ENCODE measurements at regions of chr13 and their contacts with region 1.

Region 1: GRCh38 chr13:31161828-31162590 is at the start of gene HSPH1:
- DNase-seq: peak; percentile 92
- ATAC-seq: peak; percentile 92
- H3K4me3 ChIP-seq: peak within 1 kb of the TSS; percentile 88
- H3K27ac ChIP-seq: peak within 1 kb of the TSS; percentile 79
- H3K4me1 ChIP-seq: no peaks in the 10 kb centered on the region; the same call in 1 of the 2 replicates
- H3K27me3 ChIP-seq: no peaks in the 10 kb centered on the region
- CTCF ChIP-seq: peak in 2 of 3 experiments; percentile 24 to 25; a peak in 3 of 6 replicates
- EP300 ChIP-seq: peak in 1 of 2 experiments; percentile 85; a peak in 2 of 4 replicates
- POLR2A ChIP-seq: peak; percentile 93
- RAD21 ChIP-seq: no peak
- polyA plus RNA-seq, gene HSPH1: 40.2 to 109 TPM

Region 2: DNA sequence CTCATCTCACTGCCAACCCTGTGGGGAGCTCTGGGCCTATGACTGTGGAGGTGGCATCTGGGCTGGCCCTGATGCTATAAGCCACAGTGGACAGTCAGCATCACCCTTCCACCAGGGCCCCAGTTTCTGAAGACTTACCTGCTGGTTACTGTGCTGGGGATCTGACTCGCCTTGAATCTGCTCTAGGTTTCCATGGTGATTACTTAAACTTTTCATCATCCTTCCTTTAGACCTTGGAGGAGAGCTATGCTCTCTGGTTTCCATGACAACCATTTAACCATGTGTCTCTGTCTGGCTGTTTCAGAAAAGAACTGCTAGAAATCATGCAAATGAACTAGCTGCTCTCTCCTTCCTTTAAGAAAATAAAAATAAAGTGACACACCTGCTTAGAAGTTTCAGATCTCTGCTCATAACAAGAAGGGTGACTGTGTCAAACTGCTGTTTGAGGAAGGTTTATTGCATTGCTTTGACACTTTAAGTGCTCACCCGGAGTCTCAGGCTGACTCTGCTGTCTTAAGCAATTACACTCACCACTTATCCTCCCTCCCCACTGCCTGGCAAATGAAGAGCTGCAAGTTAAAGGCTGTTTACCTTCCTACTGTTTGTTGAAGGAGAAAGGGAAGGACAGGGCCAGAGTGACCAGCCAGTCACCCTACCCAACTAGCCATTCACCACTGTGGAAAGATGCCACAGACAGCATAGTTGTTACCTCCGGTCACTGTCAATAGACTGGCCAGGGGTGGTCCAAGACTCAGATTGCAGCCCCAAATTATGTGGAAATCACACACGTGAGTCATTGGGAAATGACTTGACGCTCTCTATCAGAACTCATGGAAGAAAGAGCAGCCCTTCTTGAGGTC is 87.9 kb before region 1 on chr13:
- CTCF ChIA-PET with region 1: no interaction called
- POLR2A ChIA-PET with region 1: interaction called, 4 read pairs
- RAD21 ChIA-PET with region 1: no interaction called
- SMC1A ChIA-PET with region 1: no interaction called
- in situ Hi-C with region 1: no loop called
- intact Hi-C with region 1: loop called (anchors 2 kb)
- DNase-seq: peak; percentile 89
- ATAC-seq: peak; percentile 92
- H3K4me3 ChIP-seq: no peak overlapping the region
- H3K27ac ChIP-seq: peak overlapping the region; percentile 70
- H3K4me1 ChIP-seq: peaks cover 24% of the 10 kb centered on the region
- H3K27me3 ChIP-seq: no peaks in the 10 kb centered on the region
- CTCF ChIP-seq: no peak
- EP300 ChIP-seq: peak; percentile 39 to 80; a peak in 2 of 4 replicates
- POLR2A ChIP-seq: no peak
- RAD21 ChIP-seq: no peak

Region 3: DNA sequence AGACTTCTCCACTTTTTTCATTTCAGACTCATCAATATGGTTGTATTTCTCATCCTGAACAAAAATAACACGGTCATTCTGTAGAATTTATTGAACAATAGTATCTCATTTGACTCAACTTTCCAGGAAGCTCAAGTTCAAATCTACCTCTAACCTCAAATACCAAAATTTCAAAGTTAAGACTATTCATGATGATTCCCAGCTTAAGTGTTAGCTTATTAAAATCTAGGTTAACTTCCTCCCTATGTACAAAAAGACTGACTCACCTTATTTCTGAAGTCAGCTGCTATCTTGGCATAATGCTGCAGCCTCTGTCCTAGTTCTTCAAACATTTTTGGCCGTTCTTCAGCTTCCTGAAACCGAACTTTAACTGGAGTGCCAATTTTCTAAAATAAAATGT is 23.5 kb before region 1 on chr13:
- CTCF ChIA-PET with region 1: no interaction called
- POLR2A ChIA-PET with region 1: no interaction called
- RAD21 ChIA-PET with region 1: no interaction called
- SMC1A ChIA-PET with region 1: interaction called, 5 read pairs
- in situ Hi-C with region 1: no loop called
- intact Hi-C with region 1: loop called (anchors 1 kb)
- DNase-seq: no peak
- ATAC-seq: no peak
- H3K4me3 ChIP-seq: no peak overlapping the region
- H3K27ac ChIP-seq: no peak overlapping the region
- H3K4me1 ChIP-seq: no peaks in the 10 kb centered on the region
- H3K27me3 ChIP-seq: no peaks in the 10 kb centered on the region
- CTCF ChIP-seq: no peak
- EP300 ChIP-seq: no peak
- POLR2A ChIP-seq: no peak
- RAD21 ChIP-seq: no peak

Region 4: GRCh38 chr13:31150315-31150985 is 11.6 kb before region 1 on chr13:
- CTCF ChIA-PET with region 1: interaction called, 21 read pairs
- POLR2A ChIA-PET with region 1: interaction called, 5 read pairs
- RAD21 ChIA-PET with region 1: interaction called, 3 read pairs
- SMC1A ChIA-PET with region 1: interaction called, 5 read pairs
- in situ Hi-C with region 1: no loop called
- intact Hi-C with region 1: no loop called
- DNase-seq: no peak
- ATAC-seq: peak; percentile 29; the same call in 2 of the 3 replicates
- H3K4me3 ChIP-seq: no peak overlapping the region
- H3K27ac ChIP-seq: no peak overlapping the region
- H3K4me1 ChIP-seq: no peaks in the 10 kb centered on the region
- H3K27me3 ChIP-seq: no peaks in the 10 kb centered on the region
- CTCF ChIP-seq: no peak
- EP300 ChIP-seq: no peak
- POLR2A ChIP-seq: no peak
- RAD21 ChIP-seq: no peak

Region 5: DNA sequence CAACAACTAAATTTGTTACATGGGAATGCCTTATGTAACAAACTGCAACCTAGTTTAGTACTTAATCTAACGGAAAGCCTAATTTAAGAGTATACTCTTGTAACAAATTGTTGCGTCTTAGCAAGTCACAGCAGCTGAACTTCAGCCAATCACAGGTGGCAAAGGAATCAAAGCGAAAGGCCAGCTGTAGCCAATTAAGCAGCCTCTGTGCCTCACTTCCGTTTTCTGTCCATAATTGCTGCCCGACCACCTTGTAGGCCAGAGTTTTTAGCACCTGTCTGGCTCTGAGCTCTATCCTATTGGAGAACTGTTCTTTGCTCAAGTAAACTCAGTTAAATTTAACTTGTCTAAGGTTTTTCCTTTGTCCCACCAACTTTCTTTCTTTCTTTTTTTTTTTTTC is 17.7 kb after region 1 on chr13:
- CTCF ChIA-PET with region 1: no interaction called
- POLR2A ChIA-PET with region 1: no interaction called
- RAD21 ChIA-PET with region 1: no interaction called
- SMC1A ChIA-PET with region 1: no interaction called
- in situ Hi-C with region 1: no loop called
- intact Hi-C with region 1: no loop called
- DNase-seq: no peak
- ATAC-seq: peak; percentile 40; the same call in 2 of the 3 replicates
- H3K4me3 ChIP-seq: no peak overlapping the region
- H3K27ac ChIP-seq: no peak overlapping the region
- H3K4me1 ChIP-seq: no peaks in the 10 kb centered on the region
- H3K27me3 ChIP-seq: no peaks in the 10 kb centered on the region
- CTCF ChIP-seq: no peak
- EP300 ChIP-seq: no peak
- POLR2A ChIP-seq: no peak
- RAD21 ChIP-seq: no peak

Region 6: DNA sequence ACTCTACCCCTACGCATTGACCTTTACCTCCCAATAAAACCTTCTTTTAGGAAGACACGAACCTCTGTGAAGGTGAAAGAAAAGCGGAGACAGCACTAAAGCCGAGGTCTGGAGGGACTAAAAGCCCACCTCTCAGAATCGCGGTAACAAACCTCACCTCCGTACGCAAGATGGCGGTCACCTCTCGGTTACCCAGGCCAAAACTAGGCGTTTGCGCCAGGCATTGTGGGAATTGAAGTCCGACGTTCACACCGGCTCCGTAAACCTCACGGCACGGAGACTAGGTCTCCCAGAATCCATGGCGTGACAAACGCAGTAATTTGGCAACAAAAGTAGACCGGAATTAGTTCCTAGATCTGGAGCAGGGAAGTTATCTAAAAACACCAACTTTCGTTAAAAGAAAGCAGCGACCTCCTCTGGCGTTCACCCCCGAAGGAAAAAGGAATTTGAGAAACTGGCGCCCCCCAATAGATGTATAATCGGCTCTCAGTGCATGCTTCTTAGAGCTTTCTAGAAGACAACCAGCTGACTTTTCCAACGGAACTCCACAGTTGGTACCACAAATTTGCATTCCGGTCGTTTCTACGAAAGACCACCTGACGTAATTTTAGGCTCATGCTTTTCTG is 1376.7 kb after region 1 on chr13 and contains the start of gene N4BP2L2:
- CTCF ChIA-PET with region 1: no interaction called
- POLR2A ChIA-PET with region 1: no interaction called
- RAD21 ChIA-PET with region 1: no interaction called
- SMC1A ChIA-PET with region 1: no interaction called
- in situ Hi-C with region 1: loop called (anchors 25 kb)
- intact Hi-C with region 1: no loop called
- DNase-seq: peak; percentile 94
- ATAC-seq: peak; percentile 95
- H3K4me3 ChIP-seq: peak within 1 kb of the TSS; percentile 94
- H3K27ac ChIP-seq: peak within 1 kb of the TSS; percentile 100
- H3K4me1 ChIP-seq: peaks cover 5% of the 10 kb centered on the region; the same call in 1 of the 2 replicates
- H3K27me3 ChIP-seq: no peaks in the 10 kb centered on the region
- CTCF ChIP-seq: peak; percentile 12 to 47 (median 13); a peak in 3 of 6 replicates
- EP300 ChIP-seq: 0 out of 4 replicates have a peak, but pooled peaks of 1 of the 2 experiments have one; percentile 13
- POLR2A ChIP-seq: peak; percentile 85
- RAD21 ChIP-seq: peak; percentile 39; the same call in 1 of the 2 replicates
- polyA plus RNA-seq, gene N4BP2L2: 41.7 to 59.8 TPM

Measured in GM12878 (cell line).